IMR-90 (cell line): ENCODE measurements at regions of chr12 and their contacts with region 1.

Region 1: GRCh38 chr12:51424662-51425438 is at the start of gene SLC4A8:
- DNase-seq: peak; percentile 85
- ATAC-seq: peak; percentile 99
- H3K4me3 ChIP-seq: peak within 1 kb of the TSS; percentile 77
- H3K27ac ChIP-seq: no peak within 1 kb of the TSS
- H3K4me1 ChIP-seq: no peaks in the 10 kb centered on the region
- H3K27me3 ChIP-seq: no peaks in the 10 kb centered on the region
- CTCF ChIP-seq: peak; percentile 86
- POLR2A ChIP-seq: no peak
- RAD21 ChIP-seq: peak; percentile 77
- total RNA-seq, gene SLC4A8: 4.4 and 5.2 TPM in 2 replicates

Region 2: GRCh38 chr12:51590347-51591019 is 165.6 kb after region 1 on chr12:
- CTCF ChIA-PET with region 1: no interaction called
- POLR2A ChIA-PET with region 1: no interaction called
- dilution Hi-C with region 1: no loop called
- in situ Hi-C with region 1: no loop called
- intact Hi-C with region 1: loop called (anchors 2 kb)
- DNase-seq: peak; percentile 75
- ATAC-seq: peak; percentile 87
- H3K4me3 ChIP-seq: peak overlapping the region; percentile 67
- H3K27ac ChIP-seq: peak overlapping the region; percentile 39
- H3K4me1 ChIP-seq: no peaks in the 10 kb centered on the region; the same call in 1 of the 2 replicates
- H3K27me3 ChIP-seq: no peaks in the 10 kb centered on the region
- CTCF ChIP-seq: peak; percentile 81
- POLR2A ChIP-seq: no peak
- RAD21 ChIP-seq: peak; percentile 49

Region 3: GRCh38 chr12:51683726-51684357 is 259.0 kb after region 1 on chr12:
- CTCF ChIA-PET with region 1: no interaction called
- POLR2A ChIA-PET with region 1: no interaction called
- dilution Hi-C with region 1: no loop called
- in situ Hi-C with region 1: loop called (anchors 10 kb)
- intact Hi-C with region 1: loop called (anchors 10 kb)
- DNase-seq: peak; percentile 65
- ATAC-seq: peak; percentile 53
- H3K4me3 ChIP-seq: no peak overlapping the region
- H3K27ac ChIP-seq: no peak overlapping the region
- H3K4me1 ChIP-seq: peaks cover 4% of the 10 kb centered on the region; the same call in 1 of the 2 replicates
- H3K27me3 ChIP-seq: no peaks in the 10 kb centered on the region
- CTCF ChIP-seq: no peak
- POLR2A ChIP-seq: no peak
- RAD21 ChIP-seq: no peak

Region 4: GRCh38 chr12:51823875-51824565 is 399.2 kb after region 1 on chr12:
- CTCF ChIA-PET with region 1: interaction called, 3 read pairs
- POLR2A ChIA-PET with region 1: no interaction called
- dilution Hi-C with region 1: no loop called
- in situ Hi-C with region 1: loop called (anchors 5 kb)
- intact Hi-C with region 1: loop called (anchors 1 kb)
- DNase-seq: peak; percentile 73
- ATAC-seq: peak; percentile 33; the same call in 1 of the 2 replicates
- H3K4me3 ChIP-seq: no peak overlapping the region
- H3K27ac ChIP-seq: no peak overlapping the region
- H3K4me1 ChIP-seq: peaks cover 3% of the 10 kb centered on the region; the same call in 1 of the 2 replicates
- H3K27me3 ChIP-seq: no peaks in the 10 kb centered on the region; the same call in 1 of the 2 replicates
- CTCF ChIP-seq: peak; percentile 68
- POLR2A ChIP-seq: no peak
- RAD21 ChIP-seq: peak; percentile 83

Region 5: DNA sequence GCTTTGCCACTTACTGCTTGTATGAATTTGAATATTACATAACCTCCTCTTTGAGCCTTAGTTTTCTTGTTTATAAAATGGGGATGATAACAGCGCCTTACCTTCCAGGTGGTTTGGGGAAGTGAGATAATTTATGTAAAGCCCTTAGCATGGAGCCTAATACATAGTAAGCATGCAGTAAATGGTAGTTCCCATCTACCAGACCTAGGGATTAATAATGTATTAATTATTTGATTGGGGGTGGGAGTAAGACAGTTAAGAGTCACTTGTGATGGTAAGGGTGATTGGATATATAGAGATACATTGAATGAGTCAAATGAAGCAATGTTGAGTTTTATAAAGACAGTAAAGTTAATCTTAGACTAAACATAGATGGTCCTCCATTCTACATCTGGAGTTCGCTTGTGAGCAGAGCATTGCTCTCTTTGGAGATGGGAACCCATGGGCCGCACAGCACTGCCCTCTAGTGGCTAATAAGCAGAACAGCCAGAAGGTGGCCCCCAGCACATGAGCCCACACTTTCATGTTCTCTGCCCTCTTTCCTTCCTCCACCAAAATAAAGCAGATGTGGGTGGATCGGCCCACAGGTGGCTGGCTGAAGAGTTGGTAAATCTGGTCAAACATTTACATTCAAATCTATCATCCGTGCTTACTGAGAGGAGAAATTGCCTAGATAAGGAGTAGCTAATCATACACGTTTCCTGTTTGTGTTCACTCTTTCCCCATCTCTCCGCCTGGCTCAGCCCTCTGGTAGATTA is 555.4 kb after region 1 on chr12:
- CTCF ChIA-PET with region 1: no interaction called
- POLR2A ChIA-PET with region 1: no interaction called
- dilution Hi-C with region 1: no loop called
- in situ Hi-C with region 1: no loop called
- intact Hi-C with region 1: loop called (anchors 2 kb)
- DNase-seq: peak; percentile 63
- ATAC-seq: peak; percentile 98
- H3K4me3 ChIP-seq: no peak overlapping the region
- H3K27ac ChIP-seq: no peak overlapping the region
- H3K4me1 ChIP-seq: peaks cover 8% of the 10 kb centered on the region
- H3K27me3 ChIP-seq: no peaks in the 10 kb centered on the region
- CTCF ChIP-seq: peak; percentile 96
- POLR2A ChIP-seq: 0 out of 2 replicates have a peak, but pooled peaks have one; percentile 31
- RAD21 ChIP-seq: peak; percentile 97